CD14-positive monocyte (primary cell): ENCODE measurements at regions of chr9 and their contacts with region 1.

Region 1: DNA sequence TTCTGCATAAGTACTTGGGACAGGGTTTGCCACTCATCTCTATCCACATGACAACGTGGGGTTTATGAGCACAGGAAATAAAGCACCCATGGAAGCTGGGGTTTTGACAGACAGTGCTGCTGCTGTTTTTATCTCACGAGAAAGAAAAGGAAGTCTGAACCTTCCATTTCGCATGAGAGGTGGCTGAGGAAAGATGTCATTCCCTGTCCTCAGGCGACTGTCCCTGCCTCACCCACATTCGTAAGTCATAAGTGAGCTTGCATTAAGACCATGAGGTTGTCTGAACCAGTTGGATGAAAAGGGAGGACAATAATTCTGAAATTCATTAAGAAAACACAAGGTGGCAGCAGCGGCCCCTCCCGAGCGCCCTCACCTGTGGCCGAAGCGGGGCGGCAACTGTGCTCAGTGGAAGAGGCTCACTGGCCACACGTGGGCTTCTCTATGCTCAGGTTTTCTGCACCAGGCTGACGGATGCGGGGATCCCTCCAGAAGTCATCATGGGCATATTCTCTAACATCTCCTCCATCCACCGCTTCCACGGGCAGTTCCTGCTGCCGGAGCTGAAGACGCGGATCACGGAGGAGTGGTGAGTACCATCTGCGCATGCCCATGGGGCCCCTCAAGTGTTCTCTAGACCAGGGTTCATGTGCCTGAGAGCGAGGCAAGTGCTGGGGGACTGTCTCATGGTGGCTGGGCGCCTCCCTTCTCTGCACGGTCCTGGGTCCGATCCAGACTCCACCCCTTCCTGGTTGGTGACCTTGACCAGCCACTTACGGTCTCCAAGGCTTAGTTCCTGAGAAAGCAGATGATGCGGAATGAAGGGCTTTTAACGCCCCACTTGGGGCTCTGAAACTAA is 54.7 kb upstream of the SUSD3 start:
- DNase-seq: peak in 1 of 3 donors; percentile 28
- H3K4me3 ChIP-seq: no peak overlapping the region
- H3K4me3 Mint-ChIP-seq: no peak overlapping the region
- H3K27ac ChIP-seq: peak overlapping the region in 1 of 2 donors; percentile 38
- H3K27ac Mint-ChIP-seq: peak overlapping the region in 5 of 7 donors; percentile 50 to 77 (median 57)
- H3K4me1 ChIP-seq: no peaks in the 10 kb centered on the region
- H3K4me1 Mint-ChIP-seq: peaks cover 15% of the 10 kb centered on the region
- H3K27me3 ChIP-seq: no peaks in the 10 kb centered on the region
- H3K27me3 Mint-ChIP-seq: no peaks in the 10 kb centered on the region
- CTCF ChIP-seq: peak; percentile 75

Region 2: GRCh38 chr9:93154315-93154903 is 150.6 kb after region 1 on chr9:
- intact Hi-C with region 1: no loop called
- DNase-seq: peak in 2 of 3 donors; percentile 42 to 63
- H3K4me3 ChIP-seq: no peak overlapping the region
- H3K4me3 Mint-ChIP-seq: no peak overlapping the region
- H3K27ac ChIP-seq: no peak overlapping the region
- H3K27ac Mint-ChIP-seq: peak overlapping the region in 1 of 7 donors; percentile 64
- H3K4me1 ChIP-seq: peaks cover 0 to 3% of the 10 kb centered on the region in 2 donors
- H3K4me1 Mint-ChIP-seq: peaks cover 6% of the 10 kb centered on the region
- H3K27me3 ChIP-seq: no peaks in the 10 kb centered on the region
- H3K27me3 Mint-ChIP-seq: peaks cover 0 to 3% (median 0%) of the 10 kb centered on the region in 3 donors
- CTCF ChIP-seq: peak; percentile 76

Region 3: DNA sequence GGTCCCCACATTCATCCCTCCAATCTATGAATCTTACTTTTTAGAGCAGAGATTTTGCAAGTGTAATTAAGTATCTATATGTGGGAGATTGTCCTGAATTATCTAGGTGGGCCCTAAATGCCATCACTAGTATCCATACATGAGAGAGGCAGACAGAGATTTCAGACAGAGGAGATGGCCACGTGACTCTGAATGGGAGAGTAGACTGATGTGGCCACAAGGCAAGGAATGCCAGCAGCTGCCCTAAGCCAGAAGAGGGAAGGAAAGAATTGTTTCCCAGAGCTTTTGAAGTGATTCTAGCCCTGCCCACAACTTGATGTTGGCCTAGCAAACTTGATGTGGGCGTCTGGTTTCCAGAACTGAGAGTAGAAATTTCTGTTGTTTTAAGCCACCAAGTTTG is 1461.0 kb after region 1 on chr9:
- intact Hi-C with region 1: loop called in 1 of 2 experiments (anchors 10 kb)
- DNase-seq: no peak
- H3K4me3 ChIP-seq: no peak overlapping the region
- H3K4me3 Mint-ChIP-seq: no peak overlapping the region
- H3K27ac ChIP-seq: no peak overlapping the region
- H3K27ac Mint-ChIP-seq: no peak overlapping the region
- H3K4me1 ChIP-seq: no peaks in the 10 kb centered on the region
- H3K4me1 Mint-ChIP-seq: no peaks in the 10 kb centered on the region
- H3K27me3 ChIP-seq: no peaks in the 10 kb centered on the region
- H3K27me3 Mint-ChIP-seq: peaks cover 0 to 4% (median 0%) of the 10 kb centered on the region in 3 donors
- CTCF ChIP-seq: no peak